Heart left ventricle (tissue), 16 donors: ENCODE measurements at regions of chr6 and their contacts with region 1.

Region 1: GRCh38 chr6:89530982-89531381 is 98.0 kb downstream of the ANKRD6 start:
- DNase-seq: peak; percentile 57 to 71 (median 69)
- ATAC-seq: peak; percentile 67 to 91 (median 87)
- H3K4me3 ChIP-seq: no peak overlapping the region
- H3K27ac ChIP-seq: no peak overlapping the region
- H3K4me1 ChIP-seq: peaks cover 0 to 10% (median 1%) of the 10 kb centered on the region in 12 donors
- H3K27me3 ChIP-seq: no peaks in the 10 kb centered on the region
- CTCF ChIP-seq: no peak
- POLR2A ChIP-seq: no peak

Region 2: DNA sequence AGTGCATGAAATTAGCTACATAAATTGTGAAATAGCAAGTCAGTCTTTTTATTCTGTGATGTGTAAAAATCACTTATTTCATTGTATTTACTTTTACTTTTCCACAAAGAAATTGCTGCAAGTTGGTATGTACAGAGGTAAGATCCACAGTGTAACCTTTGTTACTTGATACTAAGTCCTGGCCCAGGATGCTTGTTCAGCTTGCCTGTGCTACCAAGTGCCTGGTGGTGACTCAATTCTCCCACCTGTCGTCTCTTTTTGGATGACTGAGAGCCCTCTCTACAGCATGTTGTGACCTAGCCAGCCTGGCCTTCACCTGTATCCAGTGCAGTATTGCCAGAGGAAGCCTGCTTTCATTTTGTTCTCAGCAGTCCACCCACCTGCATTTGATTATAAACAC is 43.1 kb before region 1 on chr6:
- intact Hi-C with region 1: loop called in 1 of 10 experiments (anchors 5 kb)
- DNase-seq: no peak
- ATAC-seq: no peak
- H3K4me3 ChIP-seq: no peak overlapping the region
- H3K27ac ChIP-seq: no peak overlapping the region
- H3K4me1 ChIP-seq: peaks cover 0 to 27% (median 13%) of the 10 kb centered on the region in 12 donors
- H3K27me3 ChIP-seq: no peaks in the 10 kb centered on the region
- CTCF ChIP-seq: no peak
- POLR2A ChIP-seq: no peak

Region 3: DNA sequence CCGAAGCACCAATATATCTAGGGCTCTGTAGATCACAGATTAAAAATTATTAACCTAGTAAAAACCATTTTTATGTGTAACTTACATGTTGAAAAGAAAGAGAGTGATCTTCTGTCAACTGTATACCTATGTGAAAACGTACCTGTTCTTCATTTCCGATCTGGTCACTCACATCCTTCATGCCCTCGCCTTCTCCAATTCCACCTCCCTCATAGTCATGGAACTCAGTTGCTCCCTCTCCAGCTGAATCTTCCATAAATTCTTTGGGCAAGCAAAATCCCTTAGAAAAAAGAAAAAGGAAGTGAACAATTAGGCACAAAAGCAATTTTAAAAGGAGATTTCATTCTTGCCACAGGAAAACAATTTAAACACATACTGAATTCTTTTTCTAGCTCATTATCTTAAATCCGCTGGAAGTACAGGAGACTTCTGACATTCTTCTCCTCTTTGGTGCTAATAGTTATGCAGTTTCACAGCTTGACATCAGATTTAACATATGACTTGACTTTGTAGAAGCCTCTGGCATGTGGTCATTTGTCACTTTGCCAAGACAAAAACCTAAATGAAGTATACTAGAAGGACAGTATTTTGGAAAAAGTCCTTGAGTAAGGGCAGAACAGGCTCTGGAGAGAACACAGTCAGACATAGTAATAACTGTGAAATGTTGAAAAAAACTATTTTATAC is 137.0 kb after region 1 on chr6:
- intact Hi-C with region 1: no loop called
- DNase-seq: no peak
- ATAC-seq: no peak
- H3K4me3 ChIP-seq: no peak overlapping the region
- H3K27ac ChIP-seq: peak overlapping the region in 3 of 12 donors; percentile 8 to 56 (median 54)
- H3K4me1 ChIP-seq: peaks cover 0 to 28% (median 7%) of the 10 kb centered on the region in 12 donors
- H3K27me3 ChIP-seq: no peaks in the 10 kb centered on the region
- CTCF ChIP-seq: no peak
- POLR2A ChIP-seq: no peak